Ovary (tissue), 10 donors: ENCODE measurements at regions of chr13 and their contacts with region 1.

Region 1: GRCh38 chr13:113029487-113030258 is 60.7 kb downstream of the MCF2L start:
- DNase-seq: peak in 4 of 5 donors; percentile 40 to 73 (median 64)
- H3K4me3 ChIP-seq: no peak overlapping the region
- H3K27ac ChIP-seq: no peak overlapping the region
- H3K4me1 ChIP-seq: no peaks in the 10 kb centered on the region
- H3K27me3 ChIP-seq: no peaks in the 10 kb centered on the region
- CTCF ChIP-seq: peak; percentile 45 to 66 (median 59)
- EP300 ChIP-seq: no peak
- POLR2A ChIP-seq: no peak

Region 2: DNA sequence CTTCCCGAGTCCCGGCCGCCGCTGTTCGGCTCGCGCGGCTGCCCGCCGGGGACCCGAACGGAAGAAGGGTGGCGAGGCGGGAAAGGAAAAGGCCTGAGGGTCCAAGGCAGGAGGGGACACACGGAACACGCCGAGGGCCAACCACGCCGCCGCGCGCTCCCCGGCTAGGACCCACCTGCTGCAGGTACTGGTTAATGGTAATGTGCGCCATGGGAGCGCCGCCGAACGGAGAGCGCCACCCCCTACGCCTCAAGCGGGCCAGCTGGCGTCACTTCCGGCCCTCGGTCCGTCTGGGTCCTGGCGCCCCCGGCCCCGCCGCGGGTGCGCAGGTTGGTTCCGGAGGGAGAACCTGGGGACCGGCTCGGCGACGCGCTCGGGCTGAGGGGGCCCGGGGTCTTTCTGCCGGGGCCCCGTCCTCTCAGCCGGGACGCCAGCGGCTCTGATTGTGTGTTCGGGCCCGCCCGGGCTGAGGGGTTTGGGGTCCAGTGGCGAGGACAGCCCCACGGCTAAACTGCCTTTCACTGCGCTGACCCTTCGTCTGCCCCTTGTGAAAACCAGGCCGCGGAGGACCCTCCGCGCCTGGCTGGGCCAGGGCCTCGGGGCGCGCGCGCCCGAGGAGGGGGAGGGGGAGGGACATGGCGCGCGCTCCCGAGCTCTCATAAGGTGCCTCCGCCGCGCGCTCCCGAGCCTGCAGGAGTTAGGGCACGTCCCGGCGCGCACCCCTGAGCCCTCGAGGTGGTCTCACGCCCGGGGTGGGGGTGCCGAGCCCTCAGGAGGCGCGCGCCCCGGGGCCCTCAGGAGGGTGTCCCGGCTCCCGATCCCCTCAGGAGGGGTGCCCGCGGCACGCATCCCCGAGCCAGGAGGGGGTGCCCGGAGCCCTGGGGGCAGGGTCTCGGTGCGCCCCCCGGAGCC is 179.0 kb after region 1 on chr13 and contains the start of gene PCID2:
- intact Hi-C with region 1: loop called in 2 of 4 experiments (anchors 10 kb)
- DNase-seq: peak; percentile 86 to 94 (median 89)
- H3K4me3 ChIP-seq: peak within 1 kb of the TSS; percentile 70
- H3K27ac ChIP-seq: peak within 1 kb of the TSS; percentile 95
- H3K4me1 ChIP-seq: peaks cover 12% of the 10 kb centered on the region
- H3K27me3 ChIP-seq: no peaks in the 10 kb centered on the region
- CTCF ChIP-seq: no peak
- EP300 ChIP-seq: no peak
- POLR2A ChIP-seq: peak; percentile 87
- total RNA-seq, gene PCID2: 43.5 to 56.2 (median 53.5) TPM